Endothelial cell of umbilical vein (primary cell): ENCODE measurements at regions of chr14 and their contacts with region 1.

Region 1: DNA sequence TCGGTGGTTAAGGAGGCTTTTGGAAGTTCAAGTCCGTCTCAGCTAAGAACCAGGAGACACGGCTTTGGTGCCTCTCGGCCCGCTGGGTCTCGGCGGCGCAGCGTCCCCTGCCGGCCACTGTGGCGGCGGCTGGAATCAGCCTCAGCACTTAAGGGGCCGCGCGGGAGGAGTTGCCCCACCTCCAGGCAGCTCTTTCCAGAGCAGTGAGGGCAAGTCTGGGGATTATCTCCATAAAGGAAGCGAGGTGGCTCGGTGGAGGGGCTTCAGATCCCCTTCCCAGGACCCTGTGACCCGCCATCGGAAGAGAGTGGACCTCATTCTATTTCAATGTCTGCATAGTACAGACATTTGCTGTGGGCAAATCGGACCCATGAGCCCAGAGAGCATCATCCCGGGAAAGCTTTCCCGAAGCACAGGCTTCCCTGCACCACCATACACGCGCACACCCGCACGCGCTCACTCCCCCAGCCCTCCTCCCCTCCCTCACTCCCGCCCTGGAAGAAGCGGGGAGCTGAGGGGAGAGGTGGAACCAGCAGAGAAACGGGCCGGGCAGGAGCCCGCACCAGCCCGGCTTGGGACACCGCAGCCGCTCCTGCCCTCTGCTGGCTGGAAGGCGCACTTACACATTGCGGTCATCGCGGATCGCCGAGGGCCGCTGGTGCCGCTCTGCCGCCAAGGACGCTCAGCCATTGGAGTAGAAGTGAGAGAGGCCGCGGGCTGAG is 15.9 kb downstream of the RNASE2 start:
- DNase-seq: peak; percentile 86
- H3K4me3 ChIP-seq: peak overlapping the region; percentile 15 to 64 (median 55)
- H3K27ac ChIP-seq: peak overlapping the region; percentile 8
- H3K4me1 ChIP-seq: peaks cover 21% of the 10 kb centered on the region
- H3K27me3 ChIP-seq: peaks cover 8 to 14% of the 10 kb centered on the region in 2 experiments
- CTCF ChIP-seq: peak; percentile 98 to 99
- POLR2A ChIP-seq: no peak

Region 2: DNA sequence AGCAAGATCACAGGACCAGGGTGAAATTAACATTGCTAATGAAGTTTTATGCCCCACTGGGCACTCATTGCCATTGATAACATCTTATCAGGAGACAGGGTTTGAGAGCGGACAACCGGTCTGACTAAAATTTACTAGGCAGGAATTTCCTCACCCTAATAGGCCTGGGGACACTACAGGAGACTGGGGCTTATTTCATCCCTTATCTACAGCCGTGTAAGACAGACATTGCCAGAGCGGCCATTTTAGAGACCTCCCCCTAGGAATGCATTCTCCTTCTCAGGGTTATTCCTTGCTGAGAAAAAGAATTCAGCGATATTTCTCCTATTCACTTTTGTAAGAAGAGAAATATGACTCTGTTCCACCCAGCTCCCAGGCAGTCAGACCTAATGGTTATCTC is 852.3 kb before region 1 on chr14:
- CTCF ChIA-PET with region 1: no interaction called
- POLR2A ChIA-PET with region 1: no interaction called
- dilution Hi-C with region 1: no loop called
- intact Hi-C with region 1: no loop called
- DNase-seq: no peak
- H3K4me3 ChIP-seq: no peak overlapping the region
- H3K27ac ChIP-seq: no peak overlapping the region
- H3K4me1 ChIP-seq: no peaks in the 10 kb centered on the region
- H3K27me3 ChIP-seq: no peaks in the 10 kb centered on the region
- CTCF ChIP-seq: no peak
- POLR2A ChIP-seq: no peak

Region 3: DNA sequence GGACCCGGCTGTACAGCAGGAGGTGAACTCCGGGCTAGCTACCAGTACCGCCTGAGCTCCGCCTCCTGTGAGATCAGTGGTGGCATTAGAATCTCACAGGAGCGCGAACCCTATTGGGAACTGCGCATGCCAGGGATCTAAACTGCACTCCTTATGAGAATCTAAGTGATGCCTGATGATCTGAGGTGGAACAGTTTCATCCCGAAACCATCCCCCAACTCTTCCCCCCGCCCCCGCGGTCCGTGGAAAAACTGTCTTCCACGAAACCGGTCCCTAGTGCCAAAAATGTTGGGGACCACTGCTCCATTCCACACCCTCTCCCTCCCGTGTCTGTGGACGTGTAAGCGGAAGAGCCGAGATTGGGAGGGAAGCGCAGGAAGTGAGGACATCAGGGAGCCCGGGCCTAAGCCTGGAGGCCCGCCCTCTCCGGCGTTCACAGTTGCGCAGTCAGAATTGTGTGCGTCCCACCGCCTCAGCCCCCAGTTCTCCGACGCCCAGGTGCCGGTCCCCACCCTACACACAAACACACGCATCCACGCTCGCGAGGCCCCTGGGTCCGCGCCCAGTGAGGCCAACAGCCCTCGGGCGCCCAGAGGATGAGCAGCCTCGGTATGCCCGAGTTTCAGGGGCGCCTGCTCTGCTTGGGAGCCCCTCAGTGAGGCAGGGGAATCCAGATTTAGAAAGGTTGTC is 288.6 kb before region 1 on chr14:
- CTCF ChIA-PET with region 1: interaction called, 4 read pairs
- POLR2A ChIA-PET with region 1: no interaction called
- dilution Hi-C with region 1: no loop called
- intact Hi-C with region 1: loop called (anchors 2 kb)
- DNase-seq: peak; percentile 95
- H3K4me3 ChIP-seq: peak overlapping the region; percentile 40 to 84 (median 80)
- H3K27ac ChIP-seq: peak overlapping the region; percentile 97
- H3K4me1 ChIP-seq: peaks cover 27% of the 10 kb centered on the region
- H3K27me3 ChIP-seq: no peaks in the 10 kb centered on the region
- CTCF ChIP-seq: no peak
- POLR2A ChIP-seq: peak; percentile 89

Region 4: GRCh38 chr14:20782280-20782890 is 188.8 kb before region 1 on chr14:
- CTCF ChIA-PET with region 1: no interaction called
- POLR2A ChIA-PET with region 1: no interaction called
- dilution Hi-C with region 1: no loop called
- intact Hi-C with region 1: loop called (anchors 10 kb)
- DNase-seq: peak; percentile 56
- H3K4me3 ChIP-seq: peak overlapping the region in 1 of 3 experiments; percentile 35
- H3K27ac ChIP-seq: no peak overlapping the region
- H3K4me1 ChIP-seq: peaks cover 20% of the 10 kb centered on the region
- H3K27me3 ChIP-seq: peaks cover 2 to 9% of the 10 kb centered on the region in 2 experiments
- CTCF ChIP-seq: no peak
- POLR2A ChIP-seq: no peak

Region 5: DNA sequence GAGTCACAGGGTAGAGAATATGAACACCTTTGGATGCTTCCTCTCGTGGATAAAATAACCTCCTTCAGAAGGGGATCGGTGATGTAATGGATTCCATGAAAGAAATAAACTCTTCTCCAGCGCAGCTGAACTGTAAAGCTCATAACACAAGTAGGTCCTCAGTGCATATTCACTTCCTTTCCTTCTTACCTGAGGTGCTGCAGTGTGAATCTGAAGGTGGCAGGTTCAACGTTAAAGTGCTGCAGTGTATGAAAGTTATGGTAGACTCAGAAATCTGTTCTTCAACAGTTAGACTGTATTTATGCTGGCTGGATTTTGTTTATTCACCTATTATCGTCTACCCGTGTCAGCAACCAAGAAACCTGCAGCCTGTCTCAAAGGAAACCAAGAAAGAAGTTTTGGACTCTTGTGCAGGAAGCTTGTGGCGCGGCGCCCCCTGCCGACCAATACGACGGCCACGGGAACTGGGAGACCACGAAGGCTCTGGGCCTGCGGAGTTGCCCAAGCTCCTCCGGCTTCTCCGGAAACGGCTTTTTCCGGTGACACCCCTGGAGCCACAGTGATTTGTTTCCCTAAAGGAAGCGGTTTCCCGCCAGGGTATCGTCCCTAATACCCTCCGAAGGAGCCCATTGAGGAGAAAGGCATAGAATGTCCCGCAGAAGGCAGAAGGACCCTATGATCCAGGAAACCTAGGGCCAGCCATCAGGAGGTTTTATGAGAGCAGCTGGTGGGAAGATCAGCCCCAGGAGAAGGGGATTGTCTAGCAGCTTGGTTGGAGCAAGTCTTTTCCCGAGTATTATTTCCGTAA is 97.6 kb before region 1 on chr14:
- CTCF ChIA-PET with region 1: interaction called, 36 read pairs
- POLR2A ChIA-PET with region 1: no interaction called
- dilution Hi-C with region 1: no loop called
- intact Hi-C with region 1: loop called (anchors 2 kb)
- DNase-seq: peak; percentile 73
- H3K4me3 ChIP-seq: peak overlapping the region in 1 of 3 experiments; percentile 15
- H3K27ac ChIP-seq: no peak overlapping the region
- H3K4me1 ChIP-seq: peaks cover 7% of the 10 kb centered on the region
- H3K27me3 ChIP-seq: peaks cover 5 to 8% of the 10 kb centered on the region in 2 experiments
- CTCF ChIP-seq: peak; percentile 87 to 95
- POLR2A ChIP-seq: no peak

Region 6: GRCh38 chr14:20982646-20983369 is 11.7 kb after region 1 on chr14:
- CTCF ChIA-PET with region 1: interaction called, 34 read pairs
- POLR2A ChIA-PET with region 1: no interaction called
- dilution Hi-C with region 1: no loop called
- intact Hi-C with region 1: loop called (anchors 2 kb)
- DNase-seq: no peak
- H3K4me3 ChIP-seq: no peak overlapping the region
- H3K27ac ChIP-seq: no peak overlapping the region
- H3K4me1 ChIP-seq: peaks cover 5% of the 10 kb centered on the region
- H3K27me3 ChIP-seq: no peaks in the 10 kb centered on the region
- CTCF ChIP-seq: no peak
- POLR2A ChIP-seq: no peak

Region 7: DNA sequence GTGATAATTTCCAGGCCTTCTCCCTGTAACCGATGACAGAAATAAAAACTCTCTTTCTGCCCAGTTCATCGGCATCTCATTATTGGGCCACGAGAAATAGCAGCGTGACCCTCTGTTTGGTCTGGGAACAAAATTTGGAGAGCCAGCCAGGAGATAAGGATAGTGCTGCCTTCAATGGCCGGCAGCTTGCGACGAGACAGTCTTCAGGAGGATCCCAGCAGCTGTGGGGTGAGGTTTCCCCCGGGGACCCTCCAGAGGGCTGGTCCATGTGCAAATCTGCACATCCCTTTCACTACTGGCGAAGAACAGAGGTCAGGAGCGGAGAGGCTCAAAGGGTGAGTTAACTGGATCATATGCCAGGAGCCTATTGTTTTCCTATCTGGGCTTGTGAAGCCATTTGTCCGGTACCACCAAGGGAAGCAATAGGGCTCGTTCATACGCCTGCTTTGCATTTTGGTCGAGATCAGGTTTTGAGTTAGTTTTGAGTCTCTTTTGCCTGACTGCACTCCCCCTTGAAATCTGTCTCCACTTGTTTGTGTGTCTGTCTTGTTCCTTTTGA is 32.7 kb after region 1 on chr14:
- CTCF ChIA-PET with region 1: interaction called, 24 read pairs
- POLR2A ChIA-PET with region 1: no interaction called
- dilution Hi-C with region 1: no loop called
- intact Hi-C with region 1: no loop called
- DNase-seq: no peak
- H3K4me3 ChIP-seq: no peak overlapping the region
- H3K27ac ChIP-seq: no peak overlapping the region
- H3K4me1 ChIP-seq: no peaks in the 10 kb centered on the region
- H3K27me3 ChIP-seq: no peaks in the 10 kb centered on the region
- CTCF ChIP-seq: no peak
- POLR2A ChIP-seq: no peak